ENCODE measurements at regions of chr5 and their contacts with region 1.

Region 1: DNA sequence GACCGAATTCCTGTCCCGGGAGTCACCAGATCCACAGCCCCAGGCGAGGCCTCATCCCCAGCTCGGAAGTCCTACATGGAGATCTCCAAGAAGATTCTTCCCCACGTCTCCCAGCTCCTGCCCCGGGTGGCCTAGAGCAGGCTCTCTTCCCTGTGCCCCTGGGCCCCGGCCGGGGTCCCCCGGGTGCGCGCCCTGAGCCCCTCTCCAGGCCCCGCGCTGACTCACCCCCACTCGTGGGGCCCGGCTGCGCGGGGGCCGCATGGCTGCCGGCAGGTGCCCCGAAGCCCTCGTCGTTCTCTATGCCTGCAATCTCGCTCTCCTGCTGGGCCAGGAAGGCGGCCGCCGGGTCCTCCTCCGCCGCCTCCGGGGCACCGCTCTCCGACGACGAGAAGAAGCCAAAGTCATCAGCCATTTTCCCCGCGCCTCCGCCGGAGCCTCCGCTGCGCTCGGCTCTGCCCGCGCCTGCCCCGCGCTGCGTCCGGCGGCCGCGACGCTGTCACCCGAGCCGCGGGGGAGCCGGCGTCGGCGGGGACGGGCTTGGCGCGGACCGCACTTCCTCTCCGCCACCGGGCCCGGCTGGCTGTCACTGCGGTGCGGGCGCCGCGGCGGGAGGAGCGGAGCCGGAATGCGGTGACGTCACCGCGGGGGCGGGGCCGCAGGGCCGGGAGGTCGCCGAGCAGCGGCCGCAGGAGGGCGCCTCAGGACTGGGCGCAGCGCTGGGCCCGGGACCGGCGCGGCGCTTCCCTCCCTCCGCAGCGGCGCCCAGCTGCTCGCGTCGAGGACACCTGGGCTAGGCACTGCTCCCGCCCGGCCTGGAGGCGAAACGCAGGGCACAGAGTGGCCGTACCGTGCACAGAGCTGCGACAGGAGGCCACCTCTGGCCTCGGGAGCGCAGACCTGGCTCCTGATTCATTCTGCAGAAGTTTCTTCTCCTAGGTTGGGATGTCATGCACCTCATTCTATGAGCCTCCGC is at the start of gene CLTB:
- DNase-seq: peak; percentile 86 to 95 (median 92)
- H3K4me3 ChIP-seq: peak within 1 kb of the TSS; percentile 56 to 97 (median 76)
- H3K27ac ChIP-seq: peak within 1 kb of the TSS; percentile 77 to 99 (median 94)
- H3K4me1 ChIP-seq: peaks cover 31 to 49% of the 10 kb centered on the region in 2 donors
- H3K27me3 ChIP-seq: no peaks in the 10 kb centered on the region
- CTCF ChIP-seq: peak; percentile 12 to 97 (median 56)
- POLR2A ChIP-seq: peak; percentile 95 to 99
- total RNA-seq, gene CLTB: 129 to 261 (median 159) TPM

Region 2: DNA sequence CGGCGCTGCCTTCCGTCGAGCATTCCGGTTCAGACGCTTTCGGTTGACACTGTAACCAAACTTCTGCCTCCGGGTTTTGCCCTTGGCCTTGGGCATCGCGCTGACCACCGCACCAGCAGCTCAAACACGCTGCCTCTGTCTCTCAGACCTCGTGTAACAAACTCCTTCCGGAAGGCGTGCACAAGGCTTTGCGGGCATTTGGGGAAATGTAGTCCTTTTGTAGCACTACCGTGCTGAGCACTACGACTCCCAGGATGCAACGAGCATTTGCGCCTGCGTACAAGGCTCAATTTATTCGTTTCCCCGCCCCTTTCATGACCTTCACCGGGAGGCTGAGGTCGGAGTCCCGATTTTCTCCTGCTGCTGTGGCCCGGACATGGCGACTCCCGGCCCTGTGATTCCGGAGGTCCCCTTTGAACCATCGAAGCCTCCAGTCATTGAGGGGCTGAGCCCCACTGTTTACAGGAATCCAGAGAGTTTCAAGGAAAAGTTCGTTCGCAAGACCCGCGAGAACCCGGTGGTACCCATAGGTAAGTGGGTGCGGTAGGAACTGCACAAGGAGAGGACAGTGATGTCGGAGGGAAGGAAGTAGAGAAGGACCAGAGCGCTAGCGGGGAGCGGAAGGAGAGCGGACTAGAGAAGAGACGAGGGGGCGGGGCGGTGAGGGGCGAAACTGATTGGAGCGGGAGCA is 27.6 kb before region 1 on chr5 and contains the starts of genes HIGD2A and NOP16:
- intact Hi-C with region 1: loop called in 1 of 2 experiments (anchors 2 kb)
- DNase-seq: peak; percentile 99 to 100 (median 100)
- H3K4me3 ChIP-seq: peak within 1 kb of the TSS; percentile 17 to 89 (median 80)
- H3K27ac ChIP-seq: peak within 1 kb of the TSS; percentile 92 to 99 (median 96)
- H3K4me1 ChIP-seq: peaks cover 12 to 24% of the 10 kb centered on the region in 2 donors
- H3K27me3 ChIP-seq: no peaks in the 10 kb centered on the region
- CTCF ChIP-seq: peak in 3 of 6 experiments; percentile 28 to 51 (median 44)
- POLR2A ChIP-seq: peak in 1 of 2 donors; percentile 7
- total RNA-seq, gene HIGD2A: 138 to 262 (median 198) TPM
- total RNA-seq, gene NOP16: 6.2 to 53.3 (median 19.3) TPM

Region 3: DNA sequence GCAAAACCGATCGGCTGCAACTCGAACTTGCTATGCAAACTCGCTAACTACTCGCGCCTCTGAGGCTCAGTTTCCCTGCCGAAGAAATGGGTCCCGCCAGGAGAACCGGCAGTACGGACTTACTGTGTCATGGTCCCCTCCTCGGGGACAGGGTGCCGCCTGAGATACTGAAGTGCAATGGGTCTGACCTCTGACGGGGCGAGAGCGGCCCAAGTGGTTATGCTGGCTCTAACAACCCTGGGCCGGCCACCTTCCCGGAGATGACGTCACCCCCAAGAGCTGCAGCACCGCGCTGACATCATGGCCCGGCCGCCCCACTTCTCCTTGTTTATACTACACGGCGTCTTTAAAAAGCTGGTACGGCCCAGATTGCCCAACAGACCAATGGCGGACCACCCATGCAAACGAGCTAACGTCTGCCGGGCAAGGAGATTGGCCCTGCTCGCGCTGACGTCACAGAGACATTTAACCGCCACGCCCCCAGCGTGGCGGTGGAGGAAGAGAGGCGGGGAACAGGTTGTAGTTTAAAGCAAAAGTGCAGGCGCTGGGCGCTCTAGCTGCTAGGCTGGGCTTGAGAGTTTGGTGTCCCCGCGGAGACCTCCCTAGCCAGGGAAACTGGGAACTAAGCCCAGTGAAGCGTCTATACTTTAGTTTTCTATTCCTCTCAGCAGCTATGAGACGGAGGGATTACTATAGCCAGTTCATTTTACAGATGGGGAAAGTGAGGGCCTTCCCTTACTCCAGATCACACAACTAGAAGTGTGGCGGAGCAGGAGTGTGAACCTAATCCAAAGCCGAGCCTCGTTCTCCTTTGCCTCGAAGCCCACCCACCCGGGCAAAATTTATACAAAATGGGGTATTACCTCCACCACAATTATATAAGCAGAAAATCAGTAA is 121.6 kb after region 1 on chr5:
- intact Hi-C with region 1: loop called in 1 of 2 experiments (anchors 5 kb)
- DNase-seq: peak; percentile 97 to 100 (median 100)
- H3K4me3 ChIP-seq: peak overlapping the region; percentile 2 to 88 (median 66)
- H3K27ac ChIP-seq: peak overlapping the region; percentile 85 to 98 (median 92)
- H3K4me1 ChIP-seq: peaks cover 30 to 55% of the 10 kb centered on the region in 2 donors
- H3K27me3 ChIP-seq: no peaks in the 10 kb centered on the region
- CTCF ChIP-seq: peak in 2 of 6 experiments; percentile 14
- POLR2A ChIP-seq: peak in 1 of 2 donors; percentile 83

Measured in adrenal gland (tissue), 19 donors.